AG04449 (cell line): ENCODE measurements at regions of chrX and their contacts with region 1.

Region 1: DNA sequence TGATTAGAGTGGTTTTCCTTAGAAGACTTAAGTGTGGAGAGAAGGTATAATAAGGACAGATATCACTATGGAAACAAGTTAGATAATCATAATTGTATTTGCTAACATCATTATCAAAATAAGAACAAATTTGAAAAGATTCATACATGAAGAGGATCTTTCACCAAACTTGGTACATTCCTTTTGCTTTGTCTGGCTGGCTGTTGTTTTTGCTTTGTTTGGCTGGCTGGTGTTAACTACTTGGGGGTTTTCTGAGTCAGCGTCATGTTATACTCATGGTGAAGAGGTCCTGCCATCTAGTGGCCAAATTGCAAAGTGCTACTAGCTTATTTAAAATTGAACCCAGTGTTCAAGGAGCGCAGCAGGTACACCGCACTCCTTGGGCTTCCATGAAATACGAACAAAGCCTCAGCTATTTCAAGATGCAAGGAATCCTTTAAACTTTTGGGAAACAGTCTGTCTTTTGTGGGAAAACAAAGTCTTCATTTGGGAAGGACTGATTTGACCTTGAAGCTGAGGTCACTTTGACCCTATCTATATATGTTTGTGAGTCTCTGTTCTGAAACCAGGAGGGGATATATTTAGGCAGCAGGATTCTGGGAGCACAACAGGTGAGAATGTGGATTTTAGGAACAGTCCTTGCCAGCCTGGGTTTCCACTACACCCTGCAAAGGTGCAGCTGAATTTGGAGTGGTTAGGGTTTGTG is 129.7 kb downstream of the PLS3 start:
- DNase-seq: no peak
- H3K4me3 ChIP-seq: no peak overlapping the region
- CTCF ChIP-seq: peak; percentile 42

Region 2: DNA sequence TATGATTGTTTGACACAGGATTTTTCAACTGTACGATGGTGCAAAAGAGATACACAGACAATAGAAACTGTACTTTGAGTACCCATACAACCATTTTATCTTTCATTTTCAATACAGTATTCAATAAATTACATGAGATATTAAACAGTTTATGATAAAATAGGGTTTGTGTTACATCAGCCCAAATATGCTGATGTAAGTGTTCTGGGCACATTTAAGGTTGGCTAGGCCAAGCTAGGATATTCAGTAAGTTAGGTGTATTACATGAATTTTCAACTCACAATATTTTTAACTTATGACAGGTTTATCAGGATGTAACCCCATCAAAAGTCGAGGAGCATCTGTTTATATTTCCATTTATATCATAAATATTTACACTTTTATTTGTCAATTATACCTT is 172.6 kb before region 1 on chrX:
- CTCF ChIA-PET with region 1: no interaction called
- POLR2A ChIA-PET with region 1: no interaction called
- DNase-seq: no peak
- H3K4me3 ChIP-seq: no peak overlapping the region
- CTCF ChIP-seq: no peak

Region 3: GRCh38 chrX:115650916-115651315 is 39.7 kb before region 1 on chrX:
- CTCF ChIA-PET with region 1: interaction called, 16 read pairs
- POLR2A ChIA-PET with region 1: no interaction called
- DNase-seq: no peak
- H3K4me3 ChIP-seq: no peak overlapping the region
- CTCF ChIP-seq: peak; percentile 44

Region 4: DNA sequence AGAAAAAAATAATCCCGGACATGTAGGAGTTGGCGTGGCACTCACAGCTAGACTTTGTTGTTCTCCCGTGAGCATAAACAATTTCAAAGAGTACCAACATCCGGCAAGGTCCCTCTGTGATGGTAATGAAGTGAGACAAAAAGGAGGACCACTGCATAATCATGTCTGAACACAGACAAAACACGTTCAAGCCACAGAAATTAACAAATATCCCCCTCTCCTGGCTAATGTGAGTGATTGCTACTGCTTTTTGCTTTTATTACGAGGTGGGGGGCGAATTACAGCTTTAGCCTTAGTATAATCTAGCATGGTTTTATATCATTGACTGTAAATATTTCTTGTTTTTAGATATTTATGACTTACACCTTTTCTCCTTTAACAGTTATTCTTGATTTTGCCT is 11.2 kb before region 1 on chrX:
- CTCF ChIA-PET with region 1: interaction called, 14 read pairs
- POLR2A ChIA-PET with region 1: no interaction called
- DNase-seq: no peak
- H3K4me3 ChIP-seq: no peak overlapping the region
- CTCF ChIP-seq: peak; percentile 29